Kidney (tissue), 22 donors: ENCODE measurements at regions of chr7 and their contacts with region 1.

Region 1: GRCh38 chr7:44581879-44582603 is at the start of gene TMED4:
- DNase-seq: peak; percentile 99 to 100 (median 100)
- H3K4me3 ChIP-seq: peak within 1 kb of the TSS; percentile 92 to 93 (median 93)
- H3K27ac ChIP-seq: peak within 1 kb of the TSS; percentile 95 to 100
- H3K4me1 ChIP-seq: peaks cover 4 to 14% (median 9%) of the 10 kb centered on the region in 3 donors
- H3K27me3 ChIP-seq: no peaks in the 10 kb centered on the region
- CTCF ChIP-seq: no peak
- total RNA-seq, gene TMED4: 105 TPM

Region 2: GRCh38 chr7:44748045-44748947 is 166.3 kb after region 1 on chr7 and contains the start of gene ZMIZ2:
- intact Hi-C with region 1: no loop called
- DNase-seq: peak; percentile 91 to 98 (median 95)
- H3K4me3 ChIP-seq: peak within 1 kb of the TSS; percentile 81 to 93 (median 85)
- H3K27ac ChIP-seq: peak within 1 kb of the TSS; percentile 88 to 92
- H3K4me1 ChIP-seq: peaks cover 0 to 29% (median 25%) of the 10 kb centered on the region in 3 donors
- H3K27me3 ChIP-seq: no peaks in the 10 kb centered on the region
- CTCF ChIP-seq: no peak
- total RNA-seq, gene ZMIZ2: 127 TPM

Region 3: DNA sequence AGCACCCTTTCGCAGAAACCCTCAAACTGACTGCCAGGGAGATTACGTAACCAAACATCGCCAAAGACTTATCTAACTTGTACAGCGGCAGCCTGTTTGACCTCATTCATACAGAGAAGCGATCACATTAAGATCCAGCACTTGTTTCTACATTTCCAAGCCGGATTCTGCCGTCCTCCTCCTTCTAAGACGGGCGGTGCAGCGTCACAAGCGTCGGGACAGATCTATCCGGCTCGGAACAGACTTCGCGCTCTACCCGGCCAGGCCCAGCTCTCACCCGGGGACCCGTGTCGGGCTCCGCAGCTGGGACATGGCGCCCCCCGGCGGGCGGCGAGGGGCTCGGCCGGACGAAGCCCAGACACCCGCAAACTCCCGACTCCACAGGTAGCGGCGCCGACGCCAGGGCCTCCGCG is 265.5 kb after region 1 on chr7:
- intact Hi-C with region 1: loop called (anchors 10 kb)
- DNase-seq: peak in 4 of 5 donors; percentile 93 to 96 (median 95)
- H3K4me3 ChIP-seq: peak overlapping the region; percentile 98 to 100 (median 99)
- H3K27ac ChIP-seq: peak overlapping the region; percentile 96 to 98
- H3K4me1 ChIP-seq: peaks cover 0 to 8% (median 4%) of the 10 kb centered on the region in 3 donors
- H3K27me3 ChIP-seq: no peaks in the 10 kb centered on the region
- CTCF ChIP-seq: peak; percentile 60

Region 4: GRCh38 chr7:45136106-45137060 is 554.3 kb after region 1 on chr7:
- intact Hi-C with region 1: loop called (anchors 10 kb)
- DNase-seq: peak in 3 of 5 donors; percentile 62 to 93 (median 83)
- H3K4me3 ChIP-seq: no peak overlapping the region
- H3K27ac ChIP-seq: no peak overlapping the region
- H3K4me1 ChIP-seq: no peaks in the 10 kb centered on the region
- H3K27me3 ChIP-seq: no peaks in the 10 kb centered on the region
- CTCF ChIP-seq: peak; percentile 95